ENCODE measurements at regions of chr12 and their contacts with region 1.

Region 1: GRCh38 chr12:51217968-51218606 is at the start of gene POU6F1:
- DNase-seq: peak; percentile 55
- H3K4me3 ChIP-seq: peak within 1 kb of the TSS; percentile 91 to 92
- H3K27ac ChIP-seq: peak within 1 kb of the TSS; percentile 95 to 96
- H3K4me1 ChIP-seq: peaks cover 5% of the 10 kb centered on the region
- H3K27me3 ChIP-seq: no peaks in the 10 kb centered on the region
- CTCF ChIP-seq: peak in 3 of 4 experiments; percentile 45 to 65 (median 57)
- POLR2A ChIP-seq: peak; percentile 23
- total RNA-seq, gene POU6F1: 13.5 to 17.2 TPM

Region 2: DNA sequence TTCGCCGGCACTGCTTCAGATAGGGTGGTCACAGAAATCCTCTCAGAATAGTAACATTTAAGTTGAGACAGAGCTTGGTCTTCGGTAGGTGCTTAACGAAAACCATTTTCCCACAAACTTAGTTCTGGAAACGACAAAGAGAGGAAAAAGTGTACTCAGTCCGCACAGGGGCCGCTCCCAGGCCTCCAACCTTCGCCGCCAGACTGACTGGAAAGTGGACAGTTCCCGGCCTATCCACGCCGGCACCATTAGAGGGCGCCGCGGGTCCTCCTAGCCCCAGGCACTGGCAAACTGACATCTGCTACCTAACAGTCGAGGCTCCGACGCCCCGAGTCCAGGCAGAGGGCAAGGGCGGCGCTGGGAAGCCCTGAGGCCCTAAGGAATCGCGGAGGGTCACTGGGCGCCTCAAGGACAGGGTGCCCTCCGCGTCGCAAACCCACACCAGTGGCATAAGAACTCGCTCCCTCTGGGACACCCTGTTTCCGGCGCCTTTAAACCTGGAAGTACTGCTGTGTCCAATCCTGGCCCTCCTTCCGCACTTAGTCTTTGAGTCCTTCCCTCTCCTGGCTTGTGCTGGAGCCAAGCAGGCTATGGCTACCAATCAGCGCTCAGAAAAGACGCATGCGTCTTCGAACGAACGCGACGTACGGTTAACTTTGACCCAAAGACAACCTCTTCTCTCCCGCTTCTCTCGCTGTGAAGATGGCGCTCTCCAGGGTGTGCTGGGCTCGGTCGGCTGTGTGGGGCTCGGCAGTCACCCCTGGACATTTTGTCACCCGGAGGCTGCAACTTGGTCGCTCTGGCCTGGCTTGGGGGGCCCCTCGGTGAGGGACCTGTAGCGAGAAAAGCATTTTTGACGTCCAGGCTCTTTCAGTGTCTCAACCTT is 170.2 kb before region 1 on chr12 and contains the start of gene LETMD1:
- intact Hi-C with region 1: loop called (anchors 10 kb)
- DNase-seq: peak; percentile 96
- H3K4me3 ChIP-seq: peak within 1 kb of the TSS; percentile 66 to 76
- H3K27ac ChIP-seq: peak within 1 kb of the TSS; percentile 85 to 89
- H3K4me1 ChIP-seq: peaks cover 7% of the 10 kb centered on the region
- H3K27me3 ChIP-seq: no peaks in the 10 kb centered on the region
- CTCF ChIP-seq: peak; percentile 69 to 90 (median 90)
- POLR2A ChIP-seq: peak; percentile 55
- total RNA-seq, gene LETMD1: 63.3 to 63.6 TPM

Region 3: DNA sequence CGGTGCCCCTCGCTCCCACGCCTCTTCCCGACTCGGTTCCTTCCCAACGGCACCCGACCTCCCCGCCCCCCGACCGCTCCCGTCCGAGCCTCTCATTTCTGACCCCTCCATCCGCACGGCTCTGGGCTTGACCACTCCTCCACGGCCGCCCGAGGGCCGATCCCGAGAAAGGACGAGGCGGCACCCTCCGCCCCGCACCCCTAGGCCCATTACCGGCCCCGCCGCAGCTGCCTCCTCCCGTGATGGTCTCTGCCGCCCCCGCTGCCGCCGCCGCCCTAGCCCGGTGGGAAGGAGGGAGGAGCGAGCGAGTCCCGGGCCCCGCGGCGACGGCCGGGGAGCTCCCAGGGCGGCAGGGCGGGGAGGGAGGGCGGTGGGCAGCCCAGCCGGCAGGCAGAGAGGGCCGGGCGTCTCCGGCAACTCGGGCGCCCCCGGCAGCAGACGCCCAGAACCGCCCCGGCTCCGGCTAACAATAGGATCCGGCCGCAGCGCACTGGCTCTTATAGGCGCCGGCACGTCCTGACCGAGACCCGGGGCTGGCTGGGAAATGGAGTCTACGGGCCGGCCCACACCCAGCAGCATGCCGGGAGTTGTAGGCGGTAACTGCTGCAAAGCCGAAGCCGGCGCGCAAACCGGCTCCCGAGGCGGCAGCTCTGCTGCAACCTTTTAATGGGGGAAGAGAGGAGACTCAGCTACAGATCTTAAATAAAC is 134.8 kb before region 1 on chr12 and contains the start of gene CSRNP2:
- intact Hi-C with region 1: loop called (anchors 5 kb)
- DNase-seq: peak; percentile 97
- H3K4me3 ChIP-seq: peak within 1 kb of the TSS; percentile 87 to 94
- H3K27ac ChIP-seq: peak within 1 kb of the TSS; percentile 84 to 90
- H3K4me1 ChIP-seq: no peaks in the 10 kb centered on the region
- H3K27me3 ChIP-seq: no peaks in the 10 kb centered on the region
- CTCF ChIP-seq: peak in 1 of 4 experiments; percentile 29
- POLR2A ChIP-seq: peak; percentile 98
- total RNA-seq, gene CSRNP2: 27.3 to 46.1 TPM

Region 4: GRCh38 chr12:51172515-51173431 is 45.3 kb before region 1 on chr12 and contains the start of gene TFCP2:
- intact Hi-C with region 1: loop called (anchors 2 kb)
- DNase-seq: peak; percentile 95
- H3K4me3 ChIP-seq: peak within 1 kb of the TSS; percentile 61 to 65
- H3K27ac ChIP-seq: peak within 1 kb of the TSS; percentile 93 to 94
- H3K4me1 ChIP-seq: no peaks in the 10 kb centered on the region
- H3K27me3 ChIP-seq: no peaks in the 10 kb centered on the region
- CTCF ChIP-seq: peak in 2 of 4 experiments; percentile 18 to 19
- POLR2A ChIP-seq: peak; percentile 61
- total RNA-seq, gene TFCP2: 11.5 to 21.0 TPM

Region 5: GRCh38 chr12:51238510-51239334 is 20.6 kb after region 1 on chr12 and contains the start of gene DAZAP2:
- intact Hi-C with region 1: loop called (anchors 2 kb)
- DNase-seq: peak; percentile 97
- H3K4me3 ChIP-seq: peak within 1 kb of the TSS; percentile 98 to 100
- H3K27ac ChIP-seq: peak within 1 kb of the TSS; percentile 100
- H3K4me1 ChIP-seq: peaks cover 6% of the 10 kb centered on the region
- H3K27me3 ChIP-seq: no peaks in the 10 kb centered on the region
- CTCF ChIP-seq: peak; percentile 28 to 56 (median 36)
- POLR2A ChIP-seq: peak; percentile 88
- total RNA-seq, gene DAZAP2: 299 to 374 TPM

Region 6: DNA sequence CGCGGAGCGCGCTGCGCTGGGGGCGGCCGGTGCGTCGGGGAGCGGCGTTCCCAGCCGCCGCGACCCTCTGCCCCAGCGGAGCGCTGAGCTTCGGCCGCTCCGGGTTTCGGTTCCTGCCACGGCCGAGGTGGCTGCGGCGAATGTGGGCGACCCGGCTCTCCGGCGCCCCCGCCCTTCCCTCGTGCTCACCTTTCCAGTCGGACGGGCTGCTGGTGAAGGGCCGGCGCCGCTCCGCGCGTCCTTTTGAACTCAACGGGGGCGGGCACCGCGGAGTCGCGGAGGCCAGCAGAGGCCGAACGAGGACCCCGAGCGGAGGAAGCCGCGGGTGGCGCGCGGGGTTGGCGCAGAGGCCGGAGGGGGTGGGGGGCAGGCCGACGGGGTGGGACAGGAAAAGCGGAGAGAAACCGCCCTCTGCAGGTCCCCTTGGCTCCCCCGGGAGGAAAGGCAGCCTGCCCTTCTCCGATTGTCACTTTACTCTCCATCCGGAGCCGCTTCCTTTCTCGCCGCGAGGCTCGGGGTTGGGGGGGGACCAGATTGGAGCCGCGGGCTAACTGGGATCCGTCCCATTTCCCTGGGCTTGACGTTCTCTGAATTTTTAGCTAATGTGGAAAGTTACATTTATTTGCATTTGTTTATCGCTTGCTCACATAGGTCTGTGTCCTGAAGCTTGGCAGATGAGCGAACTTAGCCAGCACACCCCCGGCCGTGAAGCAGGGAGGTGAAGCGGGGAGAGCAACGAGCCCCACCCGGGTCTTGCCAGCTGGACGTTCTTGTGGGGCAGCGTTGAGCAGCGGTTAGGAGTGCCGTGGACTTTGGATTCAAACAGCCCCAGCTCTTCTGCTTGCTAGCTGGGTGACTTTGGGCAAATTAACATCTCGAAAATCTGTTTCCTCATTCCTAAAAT is 52.2 kb after region 1 on chr12 and contains the start of gene SMAGP:
- intact Hi-C with region 1: no loop called
- DNase-seq: peak; percentile 75
- H3K4me3 ChIP-seq: peak within 1 kb of the TSS; percentile 58 to 69
- H3K27ac ChIP-seq: peak within 1 kb of the TSS; percentile 64 to 71
- H3K4me1 ChIP-seq: no peaks in the 10 kb centered on the region
- H3K27me3 ChIP-seq: no peaks in the 10 kb centered on the region
- CTCF ChIP-seq: peak in 1 of 4 experiments; percentile 9
- POLR2A ChIP-seq: peak; percentile 41
- total RNA-seq, gene SMAGP: 10.7 to 15.4 TPM